HCT116 (cell line): ENCODE measurements at regions of chr17 and their contacts with region 1.

Region 1: GRCh38 chr17:7261172-7261927 is 928 bp downstream of the CLDN7 start:
- DNase-seq: no peak
- ATAC-seq: peak; percentile 48
- H3K4me3 ChIP-seq: peak overlapping the region; percentile 98 to 99
- H3K27ac ChIP-seq: peak overlapping the region; percentile 94
- H3K4me1 ChIP-seq: peaks cover 38 to 60% of the 10 kb centered on the region in 2 experiments
- H3K27me3 ChIP-seq: no peaks in the 10 kb centered on the region
- CTCF ChIP-seq: no peak
- POLR2A ChIP-seq: no peak
- RAD21 ChIP-seq: no peak

Region 2: DNA sequence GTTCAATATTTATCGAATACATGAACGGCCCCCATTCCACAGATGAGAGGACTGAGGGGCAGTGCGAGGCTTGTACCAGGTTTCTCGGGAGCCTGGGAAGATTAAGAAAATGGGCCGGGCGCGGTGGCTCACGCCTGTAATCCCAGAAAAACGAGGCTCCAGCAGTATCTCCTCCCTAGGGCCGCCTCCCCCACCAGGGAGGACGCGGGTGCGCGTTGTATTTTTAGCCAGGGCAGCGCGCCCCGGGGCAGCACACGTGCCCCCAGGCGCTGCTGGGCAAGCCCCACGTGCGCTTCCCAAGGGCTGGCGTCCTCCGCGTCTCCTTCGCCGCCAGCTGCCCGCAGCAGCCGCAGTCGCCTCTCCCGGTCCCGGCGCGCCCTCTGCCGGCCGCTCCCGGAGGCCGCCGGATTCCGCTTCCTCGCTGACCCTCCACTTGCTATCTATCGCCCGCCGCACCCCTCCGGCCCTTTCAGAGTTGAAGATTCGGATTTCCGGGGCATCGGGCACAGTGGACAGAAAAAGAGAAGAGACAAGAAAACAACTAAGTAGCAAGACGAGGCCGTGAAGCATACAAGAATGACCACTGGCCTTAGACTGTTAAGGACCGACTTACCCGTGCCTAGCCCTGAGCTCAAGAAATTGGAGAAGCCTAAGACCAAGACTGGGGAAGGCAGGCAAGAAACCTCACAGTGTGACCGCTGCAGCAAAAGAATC is 35.0 kb after region 1 on chr17:
- CTCF ChIA-PET with region 1: interaction called, 6 read pairs
- POLR2A ChIA-PET with region 1: interaction called, 6 read pairs
- RAD21 ChIA-PET with region 1: interaction called in 1 of 2 experiments, 3 read pairs
- intact Hi-C with region 1: loop called (anchors 2 kb)
- DNase-seq: peak; percentile 66
- ATAC-seq: peak; percentile 77
- H3K4me3 ChIP-seq: peak overlapping the region; percentile 25 to 33
- H3K27ac ChIP-seq: peak overlapping the region; percentile 37
- H3K4me1 ChIP-seq: peaks cover 17 to 41% of the 10 kb centered on the region in 2 experiments; a peak in 3 of 4 replicates
- H3K27me3 ChIP-seq: no peaks in the 10 kb centered on the region
- CTCF ChIP-seq: peak; percentile 91 to 94 (median 93)
- POLR2A ChIP-seq: no peak
- RAD21 ChIP-seq: peak; percentile 97